Activated CD4-positive, alpha-beta memory T cell treated with anti-CD3 and anti-CD28 coated beads for 36 hours (primary cell): ENCODE measurements at regions of chr18 and their contacts with region 1.

Region 1: GRCh38 chr18:13159579-13159978 is 59.0 kb upstream of the LDLRAD4 start:
- DNase-seq: no peak
- H3K4me3 Mint-ChIP-seq: no peak overlapping the region
- H3K27ac Mint-ChIP-seq: no peak overlapping the region
- H3K4me1 Mint-ChIP-seq: peaks cover 2% of the 10 kb centered on the region
- H3K27me3 Mint-ChIP-seq: peaks cover 2% of the 10 kb centered on the region

Region 2: DNA sequence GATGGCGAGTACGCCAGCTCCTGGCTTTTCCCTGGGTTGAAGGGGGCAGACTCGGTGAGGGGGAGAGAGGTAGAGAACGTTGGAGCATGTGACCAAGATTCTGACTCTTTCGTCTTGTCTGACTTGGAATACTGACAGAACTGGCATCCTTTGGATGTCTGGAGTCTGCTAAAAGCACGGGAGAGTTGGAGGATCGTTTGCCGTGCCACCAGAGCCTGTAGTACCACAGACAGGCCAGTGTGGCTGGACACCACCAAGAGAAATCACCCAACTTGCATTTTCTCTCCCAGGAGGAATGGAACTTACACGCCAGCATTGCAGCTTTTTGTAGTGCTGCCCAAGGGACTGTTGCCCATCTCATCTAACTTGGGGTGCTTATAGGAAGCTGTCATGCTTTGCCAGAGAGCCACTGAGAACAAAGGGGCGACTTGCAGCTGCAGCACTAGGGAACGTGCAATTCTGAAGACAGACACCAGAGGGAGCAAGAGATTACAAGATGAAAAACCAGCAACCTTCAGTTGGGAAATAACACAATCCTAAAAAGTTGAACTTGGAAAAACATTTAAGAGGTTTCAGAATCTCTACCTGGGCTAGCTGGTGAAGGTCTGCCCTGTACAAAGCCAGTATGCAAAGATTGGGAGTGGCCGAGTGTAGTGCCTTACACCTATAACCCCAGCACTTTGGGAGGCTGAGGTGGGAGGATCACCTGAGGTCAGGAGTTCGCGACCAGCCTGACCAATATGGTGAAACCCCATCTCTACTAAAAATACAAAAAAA is 432.6 kb before region 1 on chr18:
- CTCF ChIA-PET with region 1: interaction called, 9 read pairs
- POLR2A ChIA-PET with region 1: no interaction called
- intact Hi-C with region 1: loop called (anchors 10 kb)
- DNase-seq: peak; percentile 43
- H3K4me3 Mint-ChIP-seq: no peak overlapping the region
- H3K27ac Mint-ChIP-seq: no peak overlapping the region
- H3K4me1 Mint-ChIP-seq: peaks cover 1% of the 10 kb centered on the region
- H3K27me3 Mint-ChIP-seq: no peaks in the 10 kb centered on the region

Region 3: GRCh38 chr18:13003466-13003896 is 156.1 kb before region 1 on chr18:
- CTCF ChIA-PET with region 1: interaction called, 7 read pairs
- POLR2A ChIA-PET with region 1: no interaction called
- intact Hi-C with region 1: loop called (anchors 5 kb)
- DNase-seq: peak; percentile 23
- H3K4me3 Mint-ChIP-seq: no peak overlapping the region
- H3K27ac Mint-ChIP-seq: no peak overlapping the region
- H3K4me1 Mint-ChIP-seq: peaks cover 16% of the 10 kb centered on the region
- H3K27me3 Mint-ChIP-seq: no peaks in the 10 kb centered on the region

Region 4: GRCh38 chr18:13175754-13176210 is 16.2 kb after region 1 on chr18:
- CTCF ChIA-PET with region 1: interaction called, 17 read pairs
- POLR2A ChIA-PET with region 1: no interaction called
- intact Hi-C with region 1: no loop called
- DNase-seq: peak; percentile 52
- H3K4me3 Mint-ChIP-seq: no peak overlapping the region
- H3K27ac Mint-ChIP-seq: no peak overlapping the region
- H3K4me1 Mint-ChIP-seq: peaks cover 32% of the 10 kb centered on the region
- H3K27me3 Mint-ChIP-seq: peaks cover 4% of the 10 kb centered on the region